ENCODE measurements at regions of chr2 and their contacts with region 1.

Region 1: GRCh38 chr2:144131042-144131441 is 388.9 kb downstream of the ZEB2 start:
- DNase-seq: peak; percentile 70
- ATAC-seq: peak; percentile 69
- H3K4me3 ChIP-seq: no peak overlapping the region
- H3K27ac ChIP-seq: no peak overlapping the region
- H3K4me1 ChIP-seq: peaks cover 17% of the 10 kb centered on the region
- H3K27me3 ChIP-seq: no peaks in the 10 kb centered on the region
- CTCF ChIP-seq: no peak

Region 2: DNA sequence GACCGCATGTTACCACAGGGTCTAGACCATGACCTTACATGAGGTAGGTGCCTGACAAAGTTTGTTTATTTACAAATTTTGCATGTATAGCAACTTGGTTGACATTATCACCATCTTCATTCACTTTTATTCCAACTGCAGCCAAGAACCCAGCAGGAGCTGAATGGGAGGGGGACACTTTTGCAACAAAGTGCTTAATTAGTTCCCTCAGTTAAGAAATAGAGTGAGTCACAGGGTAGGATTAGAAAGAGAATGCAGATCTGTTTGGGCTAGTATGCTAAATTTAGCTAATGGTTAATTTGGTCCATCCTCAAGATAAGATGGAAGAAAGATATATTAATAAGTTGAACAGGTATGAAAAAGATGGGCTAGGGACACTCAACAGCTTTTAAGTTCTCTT is 322.9 kb before region 1 on chr2:
- CTCF ChIA-PET with region 1: interaction called, 10 read pairs
- POLR2A ChIA-PET with region 1: no interaction called
- intact Hi-C with region 1: no loop called
- DNase-seq: no peak
- ATAC-seq: no peak
- H3K4me3 ChIP-seq: no peak overlapping the region
- H3K27ac ChIP-seq: no peak overlapping the region
- H3K4me1 ChIP-seq: no peaks in the 10 kb centered on the region
- H3K27me3 ChIP-seq: no peaks in the 10 kb centered on the region
- CTCF ChIP-seq: no peak

Region 3: DNA sequence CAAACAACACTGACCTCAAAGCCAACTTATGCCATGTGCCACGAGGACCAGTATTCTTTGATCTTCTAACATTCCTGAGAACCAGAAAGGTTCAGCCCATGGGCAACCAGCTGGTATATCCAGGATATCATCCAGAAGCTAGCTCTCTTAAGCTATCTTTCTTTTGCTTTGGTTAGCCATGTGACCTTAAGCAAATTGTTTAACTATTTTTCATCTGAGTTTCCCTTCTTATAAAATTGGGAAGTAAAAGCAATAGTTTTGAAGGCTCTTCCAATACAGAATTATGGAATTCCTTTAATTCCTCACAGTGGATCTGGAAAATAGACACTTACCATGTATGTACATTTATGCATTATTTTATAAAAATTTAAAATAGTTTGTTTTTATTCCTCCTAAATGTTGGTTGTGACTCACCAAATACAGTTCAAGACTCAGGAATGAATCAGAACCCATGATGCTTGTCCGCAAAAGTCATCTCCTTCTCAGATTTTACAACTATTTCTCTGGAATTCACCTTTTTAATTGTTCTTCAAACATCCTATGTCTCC is 46.9 kb before region 1 on chr2:
- CTCF ChIA-PET with region 1: no interaction called
- POLR2A ChIA-PET with region 1: no interaction called
- intact Hi-C with region 1: no loop called
- DNase-seq: peak; percentile 82
- ATAC-seq: peak; percentile 78
- H3K4me3 ChIP-seq: no peak overlapping the region
- H3K27ac ChIP-seq: peak overlapping the region; percentile 85
- H3K4me1 ChIP-seq: peaks cover 59% of the 10 kb centered on the region
- H3K27me3 ChIP-seq: no peaks in the 10 kb centered on the region
- CTCF ChIP-seq: no peak

Region 4: GRCh38 chr2:144504218-144504641 is 373.2 kb after region 1 on chr2:
- CTCF ChIA-PET with region 1: no interaction called
- POLR2A ChIA-PET with region 1: no interaction called
- intact Hi-C with region 1: no loop called
- DNase-seq: no peak
- ATAC-seq: no peak
- H3K4me3 ChIP-seq: no peak overlapping the region
- H3K27ac ChIP-seq: no peak overlapping the region
- H3K4me1 ChIP-seq: peaks cover 8% of the 10 kb centered on the region; the same call in 1 of the 2 replicates
- H3K27me3 ChIP-seq: no peaks in the 10 kb centered on the region
- CTCF ChIP-seq: no peak